HepG2 (cell line): ENCODE measurements at regions of chr14 and their contacts with region 1.

Region 1: DNA sequence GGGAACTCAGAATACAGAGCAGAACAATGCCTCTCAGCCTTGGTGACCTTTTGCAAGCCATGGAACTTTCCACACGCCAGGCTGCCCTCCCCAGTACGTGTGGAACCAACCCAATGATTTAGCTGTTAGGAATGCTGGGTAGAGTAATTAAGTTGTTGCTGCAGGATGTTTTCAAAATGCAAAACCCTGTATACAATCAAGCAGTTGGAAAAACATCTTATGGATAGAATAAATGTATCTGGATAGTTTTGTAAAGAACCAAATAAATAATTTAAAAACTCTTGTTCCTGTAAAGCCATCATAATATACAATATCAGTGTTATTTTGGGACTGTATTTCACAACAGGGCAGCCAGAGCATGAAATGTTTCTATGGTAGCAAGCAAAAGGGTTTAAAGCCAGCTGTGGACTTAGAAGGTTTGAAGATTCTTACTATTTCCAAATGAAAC is 19.4 kb downstream of the PPP1R36 start:
- DNase-seq: peak; percentile 10
- ATAC-seq: peak; percentile 60
- H3K4me3 ChIP-seq: no peak overlapping the region
- H3K27ac ChIP-seq: no peak overlapping the region
- H3K4me1 ChIP-seq: no peaks in the 10 kb centered on the region
- H3K27me3 ChIP-seq: peaks cover 0 to 4% of the 10 kb centered on the region in 2 experiments; a peak in 1 of 5 replicates
- CTCF ChIP-seq: no peak
- EP300 ChIP-seq: no peak
- POLR2A ChIP-seq: no peak
- RAD21 ChIP-seq: no peak

Region 2: GRCh38 chr14:64478634-64479250 is 90.5 kb before region 1 on chr14:
- CTCF ChIA-PET with region 1: no interaction called
- POLR2A ChIA-PET with region 1: no interaction called
- in situ Hi-C with region 1: no loop called
- intact Hi-C with region 1: no loop called
- DNase-seq: no peak
- ATAC-seq: no peak
- H3K4me3 ChIP-seq: no peak overlapping the region
- H3K27ac ChIP-seq: no peak overlapping the region
- H3K4me1 ChIP-seq: peaks cover 8% of the 10 kb centered on the region
- H3K27me3 ChIP-seq: no peaks in the 10 kb centered on the region
- CTCF ChIP-seq: peak; percentile 21; the same call in 1 of the 2 replicates
- EP300 ChIP-seq: no peak
- POLR2A ChIP-seq: no peak
- RAD21 ChIP-seq: no peak

Region 3: DNA sequence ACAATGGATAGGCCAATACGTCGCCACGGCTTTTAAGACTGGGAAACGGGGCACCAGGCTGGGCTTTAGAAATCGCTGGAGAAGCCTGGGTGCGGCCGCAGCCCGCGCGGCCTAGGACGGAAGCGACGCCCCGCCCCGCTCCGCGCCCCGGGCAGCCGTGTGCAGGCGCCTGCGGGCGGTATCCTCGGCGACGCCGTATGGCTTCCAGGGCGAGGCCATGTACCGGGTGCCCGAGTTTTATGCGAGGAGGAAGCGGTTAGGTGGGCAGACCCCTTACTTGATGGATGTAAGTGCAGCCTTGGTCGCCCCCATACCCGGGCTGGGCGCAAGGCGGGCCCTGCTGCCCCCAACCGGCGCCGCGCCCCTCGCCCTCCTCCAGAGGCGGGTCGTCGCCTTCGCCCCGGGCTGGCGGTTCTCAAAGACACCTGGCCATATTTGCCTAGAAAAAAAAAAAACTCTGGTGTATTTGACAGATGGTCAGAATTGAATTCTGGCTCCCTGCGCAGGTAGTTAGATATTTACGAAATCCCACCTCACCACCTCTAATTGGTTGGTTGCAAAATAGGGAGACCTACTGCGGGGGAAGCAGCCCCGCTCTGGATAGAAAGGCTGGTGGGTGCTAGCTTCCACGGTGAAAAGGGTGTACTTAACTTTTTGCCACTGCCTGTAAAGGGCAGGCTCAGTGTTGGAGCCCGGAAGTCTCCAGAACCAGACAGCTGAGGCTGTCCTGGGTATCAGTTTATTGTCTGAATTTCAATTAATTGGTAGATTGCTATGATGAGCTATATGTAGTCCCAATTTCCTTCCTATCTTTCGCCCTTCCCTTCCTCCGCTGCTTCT is 19.2 kb before region 1 on chr14 and contains the start of gene PPP1R36:
- CTCF ChIA-PET with region 1: no interaction called
- POLR2A ChIA-PET with region 1: no interaction called
- in situ Hi-C with region 1: no loop called
- intact Hi-C with region 1: no loop called
- DNase-seq: no peak
- ATAC-seq: no peak
- H3K4me3 ChIP-seq: no peak within 1 kb of the TSS
- H3K27ac ChIP-seq: no peak within 1 kb of the TSS
- H3K4me1 ChIP-seq: no peaks in the 10 kb centered on the region
- H3K27me3 ChIP-seq: peaks cover 0 to 21% of the 10 kb centered on the region in 2 experiments; a peak in 2 of 5 replicates
- CTCF ChIP-seq: no peak
- EP300 ChIP-seq: no peak
- POLR2A ChIP-seq: no peak
- RAD21 ChIP-seq: no peak
- total RNA-seq, gene PPP1R36: 0.11 TPM in 1 of 2 replicates, not detected in the other

Region 4: GRCh38 chr14:64598404-64598803 is 29.2 kb after region 1 on chr14:
- CTCF ChIA-PET with region 1: no interaction called
- POLR2A ChIA-PET with region 1: no interaction called
- in situ Hi-C with region 1: no loop called
- intact Hi-C with region 1: no loop called
- DNase-seq: no peak
- ATAC-seq: no peak
- H3K4me3 ChIP-seq: no peak overlapping the region
- H3K27ac ChIP-seq: no peak overlapping the region
- H3K4me1 ChIP-seq: peaks cover 15% of the 10 kb centered on the region
- H3K27me3 ChIP-seq: no peaks in the 10 kb centered on the region; a peak in 1 of 5 replicates
- CTCF ChIP-seq: no peak
- EP300 ChIP-seq: no peak
- POLR2A ChIP-seq: no peak
- RAD21 ChIP-seq: no peak

Region 5: DNA sequence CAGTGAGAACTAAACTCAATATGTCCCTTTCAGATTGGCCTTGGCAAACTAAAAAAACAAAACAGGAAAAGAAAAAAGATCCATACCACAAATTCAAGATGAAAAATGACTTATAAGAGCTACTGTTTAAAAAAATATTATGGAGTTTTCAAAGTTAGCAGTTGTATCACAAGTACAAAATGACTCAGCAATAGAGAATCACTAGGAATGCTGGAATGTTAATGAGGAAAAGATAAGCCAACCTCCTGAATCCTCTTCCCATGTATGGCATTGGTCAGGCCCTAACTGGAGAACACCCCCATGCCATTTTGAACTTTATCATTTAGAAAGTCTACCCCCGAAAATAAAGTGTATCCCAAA is 42.8 kb after region 1 on chr14:
- CTCF ChIA-PET with region 1: no interaction called
- POLR2A ChIA-PET with region 1: no interaction called
- in situ Hi-C with region 1: no loop called
- intact Hi-C with region 1: loop called (anchors 1 kb)
- DNase-seq: no peak
- ATAC-seq: no peak
- H3K4me3 ChIP-seq: no peak overlapping the region
- H3K27ac ChIP-seq: no peak overlapping the region
- H3K4me1 ChIP-seq: peaks cover 24% of the 10 kb centered on the region
- H3K27me3 ChIP-seq: no peaks in the 10 kb centered on the region
- CTCF ChIP-seq: no peak
- EP300 ChIP-seq: no peak
- POLR2A ChIP-seq: no peak
- RAD21 ChIP-seq: no peak